Mammary epithelial cell (primary cell): ENCODE measurements at regions of chr11 and their contacts with region 1.

Region 1: DNA sequence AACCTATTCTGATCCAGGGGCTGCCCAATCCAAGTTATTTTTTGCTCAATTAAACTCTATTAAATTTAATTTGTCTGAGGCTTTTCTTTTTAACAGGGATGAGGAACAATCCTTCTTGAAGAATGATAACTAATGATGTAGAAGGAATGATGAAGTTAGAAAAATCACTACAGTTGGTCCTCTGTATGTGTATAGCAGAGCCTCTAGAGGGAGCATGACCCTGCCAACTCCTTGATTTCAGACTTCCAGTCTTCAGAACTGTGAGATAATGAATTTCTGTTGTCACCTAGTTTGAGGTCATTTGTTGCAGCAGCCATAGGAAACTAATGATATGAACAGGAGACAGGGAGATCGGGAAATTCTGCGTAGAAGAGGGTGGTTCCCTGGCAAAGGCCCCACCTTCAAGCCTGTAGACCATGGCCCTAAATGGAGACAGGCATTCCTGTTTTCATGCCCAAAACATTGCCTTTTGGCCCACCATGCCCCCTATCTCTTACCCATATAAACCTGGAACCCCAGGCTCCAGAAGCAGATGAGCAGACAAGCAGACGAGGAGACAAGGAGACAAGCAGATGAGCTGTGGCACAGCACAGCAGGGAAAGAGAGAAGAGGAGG is 7.7 kb upstream of the QSER1 start:
- DNase-seq: no peak
- H3K4me3 ChIP-seq: no peak overlapping the region
- H3K27ac ChIP-seq: no peak overlapping the region
- H3K4me1 ChIP-seq: no peaks in the 10 kb centered on the region
- H3K27me3 ChIP-seq: no peaks in the 10 kb centered on the region
- CTCF ChIP-seq: peak; percentile 41 to 65

Region 2: GRCh38 chr11:32751381-32751780 is 133.5 kb before region 1 on chr11:
- CTCF ChIA-PET with region 1: no interaction called
- dilution Hi-C with region 1: no loop called
- in situ Hi-C with region 1: no loop called
- intact Hi-C with region 1: loop called (anchors 1 kb)
- DNase-seq: no peak
- H3K4me3 ChIP-seq: no peak overlapping the region
- H3K27ac ChIP-seq: no peak overlapping the region
- H3K4me1 ChIP-seq: no peaks in the 10 kb centered on the region
- H3K27me3 ChIP-seq: peaks cover 4% of the 10 kb centered on the region
- CTCF ChIP-seq: no peak

Region 3: GRCh38 chr11:32809313-32809712 is 75.6 kb before region 1 on chr11:
- CTCF ChIA-PET with region 1: interaction called, 4 read pairs
- dilution Hi-C with region 1: no loop called
- in situ Hi-C with region 1: no loop called
- intact Hi-C with region 1: loop called (anchors 5 kb)
- DNase-seq: peak; percentile 67
- H3K4me3 ChIP-seq: no peak overlapping the region
- H3K27ac ChIP-seq: no peak overlapping the region
- H3K4me1 ChIP-seq: no peaks in the 10 kb centered on the region
- H3K27me3 ChIP-seq: no peaks in the 10 kb centered on the region
- CTCF ChIP-seq: peak; percentile 90 to 92

Region 4: GRCh38 chr11:32829680-32830412 is 55.0 kb before region 1 on chr11 and contains the start of gene PRRG4:
- CTCF ChIA-PET with region 1: no interaction called
- dilution Hi-C with region 1: no loop called
- in situ Hi-C with region 1: loop called in 1 of 2 experiments (anchors 10 kb)
- intact Hi-C with region 1: loop called (anchors 5 kb)
- DNase-seq: peak; percentile 90
- H3K4me3 ChIP-seq: peak within 1 kb of the TSS; percentile 56 to 93 (median 89)
- H3K27ac ChIP-seq: peak within 1 kb of the TSS; percentile 81
- H3K4me1 ChIP-seq: peaks cover 10% of the 10 kb centered on the region
- H3K27me3 ChIP-seq: no peaks in the 10 kb centered on the region
- CTCF ChIP-seq: no peak
- total RNA-seq, gene PRRG4: 10.3 to 15.2 TPM

Region 5: GRCh38 chr11:32870676-32871075 is 14.2 kb before region 1 on chr11:
- CTCF ChIA-PET with region 1: no interaction called
- dilution Hi-C with region 1: no loop called
- in situ Hi-C with region 1: no loop called
- intact Hi-C with region 1: no loop called
- DNase-seq: no peak
- H3K4me3 ChIP-seq: no peak overlapping the region
- H3K27ac ChIP-seq: no peak overlapping the region
- H3K4me1 ChIP-seq: no peaks in the 10 kb centered on the region
- H3K27me3 ChIP-seq: no peaks in the 10 kb centered on the region
- CTCF ChIP-seq: peak in 1 of 2 donors; percentile 12

Region 6: GRCh38 chr11:32960553-32961164 is 75.8 kb after region 1 on chr11:
- CTCF ChIA-PET with region 1: no interaction called
- dilution Hi-C with region 1: no loop called
- in situ Hi-C with region 1: no loop called
- intact Hi-C with region 1: loop called (anchors 2 kb)
- DNase-seq: peak; percentile 40
- H3K4me3 ChIP-seq: no peak overlapping the region
- H3K27ac ChIP-seq: no peak overlapping the region
- H3K4me1 ChIP-seq: no peaks in the 10 kb centered on the region
- H3K27me3 ChIP-seq: no peaks in the 10 kb centered on the region
- CTCF ChIP-seq: peak; percentile 50 to 63

Region 7: GRCh38 chr11:32990481-32990880 is 105.6 kb after region 1 on chr11:
- CTCF ChIA-PET with region 1: no interaction called
- dilution Hi-C with region 1: no loop called
- in situ Hi-C with region 1: no loop called
- intact Hi-C with region 1: no loop called
- DNase-seq: no peak
- H3K4me3 ChIP-seq: no peak overlapping the region
- H3K27ac ChIP-seq: no peak overlapping the region
- H3K4me1 ChIP-seq: no peaks in the 10 kb centered on the region
- H3K27me3 ChIP-seq: no peaks in the 10 kb centered on the region
- CTCF ChIP-seq: no peak

Region 8: GRCh38 chr11:33089776-33090175 is 204.9 kb after region 1 on chr11:
- CTCF ChIA-PET with region 1: no interaction called
- dilution Hi-C with region 1: no loop called
- in situ Hi-C with region 1: no loop called
- intact Hi-C with region 1: no loop called
- DNase-seq: peak; percentile 32
- H3K4me3 ChIP-seq: no peak overlapping the region
- H3K27ac ChIP-seq: no peak overlapping the region
- H3K4me1 ChIP-seq: no peaks in the 10 kb centered on the region
- H3K27me3 ChIP-seq: no peaks in the 10 kb centered on the region
- CTCF ChIP-seq: peak; percentile 37 to 41